ENCODE measurements at regions of chr16 and their contacts with region 1.

Region 1: GRCh38 chr16:12228602-12229499 is 252.3 kb downstream of the SNX29 start:
- DNase-seq: no peak
- H3K4me3 ChIP-seq: no peak overlapping the region
- CTCF ChIP-seq: peak; percentile 92

Region 2: DNA sequence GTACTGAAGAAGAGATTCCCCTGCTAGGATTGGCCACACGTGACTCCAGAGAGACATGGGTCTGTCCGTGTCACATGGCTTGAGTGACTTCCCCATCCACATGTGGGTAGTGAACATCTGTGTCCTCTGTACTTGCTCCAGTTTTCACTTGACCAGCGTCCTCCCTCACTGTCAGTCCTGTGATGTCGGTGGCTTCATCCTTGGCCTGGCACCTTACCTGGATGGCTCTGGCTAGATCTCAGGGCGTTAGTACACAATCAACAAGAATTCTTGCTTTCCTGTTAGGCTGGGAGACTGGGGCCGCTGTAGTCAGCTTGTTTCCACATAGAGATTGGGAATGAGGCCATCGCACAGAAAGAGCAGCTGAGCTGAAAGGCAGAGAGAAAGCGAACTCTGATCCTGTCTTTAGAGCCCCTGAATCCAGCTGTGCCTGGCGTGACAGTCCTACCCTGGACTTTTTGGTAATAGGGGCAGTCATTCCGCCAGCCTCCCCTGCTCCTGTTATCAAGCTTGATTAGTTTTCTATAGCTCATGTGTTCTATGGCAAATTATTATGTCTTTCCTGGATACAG is 25.0 kb before region 1 on chr16:
- CTCF ChIA-PET with region 1: interaction called, 10 read pairs
- POLR2A ChIA-PET with region 1: no interaction called
- DNase-seq: no peak
- H3K4me3 ChIP-seq: no peak overlapping the region
- CTCF ChIP-seq: no peak

Region 3: GRCh38 chr16:12240036-12240435 is 11.2 kb after region 1 on chr16:
- CTCF ChIA-PET with region 1: interaction called, 36 read pairs
- POLR2A ChIA-PET with region 1: no interaction called
- DNase-seq: no peak
- H3K4me3 ChIP-seq: no peak overlapping the region
- CTCF ChIP-seq: no peak

Region 4: GRCh38 chr16:12340151-12340733 is 111.4 kb after region 1 on chr16:
- CTCF ChIA-PET with region 1: interaction called, 10 read pairs
- POLR2A ChIA-PET with region 1: no interaction called
- DNase-seq: no peak
- H3K4me3 ChIP-seq: no peak overlapping the region
- CTCF ChIP-seq: peak; percentile 12